Heart left ventricle (tissue), 16 donors: ENCODE measurements at regions of chr22 and their contacts with region 1.

Region 1: GRCh38 chr22:19619144-19620009 is 94.9 kb upstream of the SEPTIN5 start:
- DNase-seq: no peak
- ATAC-seq: no peak
- H3K4me3 ChIP-seq: no peak overlapping the region
- H3K27ac ChIP-seq: no peak overlapping the region
- H3K4me1 ChIP-seq: peaks cover 0 to 17% (median 6%) of the 10 kb centered on the region in 12 donors
- H3K27me3 ChIP-seq: no peaks in the 10 kb centered on the region
- CTCF ChIP-seq: no peak
- POLR2A ChIP-seq: no peak

Region 2: GRCh38 chr22:19325296-19325948 is 294.0 kb before region 1 on chr22:
- intact Hi-C with region 1: no loop called
- DNase-seq: no peak
- ATAC-seq: no peak
- H3K4me3 ChIP-seq: no peak overlapping the region
- H3K27ac ChIP-seq: no peak overlapping the region
- H3K4me1 ChIP-seq: no peaks in the 10 kb centered on the region
- H3K27me3 ChIP-seq: no peaks in the 10 kb centered on the region
- CTCF ChIP-seq: no peak
- POLR2A ChIP-seq: no peak

Region 3: DNA sequence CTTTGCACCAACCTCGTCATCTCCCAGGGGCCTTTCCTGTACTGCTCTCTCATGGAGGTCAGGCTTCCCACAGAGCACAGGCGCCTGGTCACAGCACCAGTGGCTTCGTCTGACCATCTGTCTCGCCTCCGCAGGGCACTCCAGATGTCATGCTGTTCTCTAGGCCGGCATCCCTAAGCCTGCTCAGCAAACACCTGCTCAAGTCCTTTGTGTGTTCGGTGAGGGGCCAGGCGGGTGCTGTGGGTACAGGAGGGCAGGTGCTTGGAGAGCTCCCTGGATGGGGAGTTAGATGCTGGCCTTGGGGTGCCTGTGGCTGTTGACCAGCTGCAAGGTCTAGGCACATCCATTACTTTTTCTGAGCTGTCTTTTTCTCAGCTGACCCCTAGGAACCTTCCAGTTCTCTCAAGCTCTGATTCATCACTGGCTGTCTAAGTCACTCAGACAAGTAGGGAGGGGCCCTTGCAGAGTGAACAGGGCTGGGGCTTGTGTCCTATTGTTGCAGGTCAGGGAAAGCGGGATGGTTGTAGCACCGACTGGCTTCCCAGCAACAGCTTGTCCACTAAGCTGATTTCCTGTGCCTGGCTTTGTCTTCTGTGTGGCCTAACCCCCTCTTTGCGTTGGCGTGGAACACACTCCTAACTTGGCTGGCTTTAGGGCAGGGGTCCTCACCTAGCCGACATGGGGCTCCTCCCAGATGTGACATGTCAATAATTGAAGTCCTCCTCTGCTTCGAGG is 104.4 kb before region 1 on chr22:
- intact Hi-C with region 1: loop called in 3 of 10 experiments (anchors 5 to 10 kb)
- DNase-seq: no peak
- ATAC-seq: no peak
- H3K4me3 ChIP-seq: no peak overlapping the region
- H3K27ac ChIP-seq: no peak overlapping the region
- H3K4me1 ChIP-seq: no peaks in the 10 kb centered on the region
- H3K27me3 ChIP-seq: no peaks in the 10 kb centered on the region
- CTCF ChIP-seq: no peak
- POLR2A ChIP-seq: no peak

Region 4: GRCh38 chr22:19568337-19569275 is 50.8 kb before region 1 on chr22:
- intact Hi-C with region 1: loop called in 3 of 10 experiments (anchors 5 to 10 kb)
- DNase-seq: peak in 1 of 5 donors; percentile 56
- ATAC-seq: peak in 2 of 4 donors; percentile 51 to 60
- H3K4me3 ChIP-seq: no peak overlapping the region
- H3K27ac ChIP-seq: peak overlapping the region in 6 of 12 donors; percentile 27 to 79 (median 72)
- H3K4me1 ChIP-seq: peaks cover 0 to 52% (median 20%) of the 10 kb centered on the region in 12 donors
- H3K27me3 ChIP-seq: no peaks in the 10 kb centered on the region
- CTCF ChIP-seq: no peak
- POLR2A ChIP-seq: no peak

Region 5: DNA sequence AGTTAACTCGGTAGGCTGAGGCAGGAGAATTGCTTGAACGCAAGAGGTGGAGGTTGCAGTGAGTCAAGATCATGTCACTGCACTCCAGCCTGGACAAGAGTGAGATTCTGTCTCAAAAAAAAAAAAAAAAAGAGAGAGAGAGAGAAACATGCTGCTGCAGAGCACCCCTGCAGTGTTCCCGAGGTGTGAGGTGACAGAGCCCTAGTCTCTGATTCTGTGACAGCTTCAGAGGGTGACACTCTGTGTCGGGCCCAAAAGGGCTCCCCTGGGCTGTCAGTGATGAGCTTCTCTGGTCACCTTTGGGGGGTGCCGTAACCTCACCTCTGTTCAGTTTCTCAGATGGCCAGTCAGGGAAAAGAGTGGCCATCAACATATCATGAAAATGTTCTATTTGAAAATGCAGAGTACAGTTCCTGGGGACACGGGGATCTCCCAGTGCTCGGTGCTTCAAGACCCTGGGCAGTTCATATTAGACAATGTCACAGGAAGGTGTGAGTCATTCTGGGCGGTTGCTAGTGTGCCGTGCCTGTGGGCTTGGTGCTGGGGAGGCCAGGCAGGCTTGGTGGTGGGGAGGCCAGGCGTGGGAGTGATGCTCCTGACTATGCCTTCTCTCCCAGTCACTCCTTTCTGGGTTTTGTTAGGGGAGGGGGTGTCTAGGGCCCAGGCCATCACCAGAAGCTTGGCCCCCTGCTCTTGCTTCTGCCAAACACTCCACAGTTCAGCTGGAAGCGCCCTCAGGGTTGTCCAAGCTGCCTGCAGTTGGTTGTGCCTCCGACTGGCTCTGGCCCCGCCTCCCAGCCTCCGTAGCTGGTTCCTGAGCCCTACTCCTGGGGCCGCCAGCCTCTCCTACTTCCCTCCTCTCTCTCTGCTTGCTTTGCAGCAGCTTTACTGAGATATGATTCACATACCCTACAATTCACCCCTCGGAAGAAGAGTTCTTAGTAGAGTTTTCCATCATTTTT is 42.6 kb before region 1 on chr22:
- intact Hi-C with region 1: loop called in 2 of 10 experiments (anchors 5 kb)
- DNase-seq: peak in 4 of 5 donors; percentile 44 to 70 (median 52)
- ATAC-seq: peak; percentile 76 to 83 (median 80)
- H3K4me3 ChIP-seq: no peak overlapping the region
- H3K27ac ChIP-seq: peak overlapping the region; percentile 37 to 78 (median 62)
- H3K4me1 ChIP-seq: peaks cover 0 to 47% (median 24%) of the 10 kb centered on the region in 12 donors
- H3K27me3 ChIP-seq: peaks cover 0 to 2% (median 0%) of the 10 kb centered on the region in 9 donors
- CTCF ChIP-seq: no peak
- POLR2A ChIP-seq: no peak

Region 6: GRCh38 chr22:19641254-19641982 is 22.0 kb after region 1 on chr22:
- intact Hi-C with region 1: no loop called
- DNase-seq: no peak
- ATAC-seq: peak in 1 of 4 donors; percentile 22
- H3K4me3 ChIP-seq: no peak overlapping the region
- H3K27ac ChIP-seq: no peak overlapping the region
- H3K4me1 ChIP-seq: peaks cover 0 to 11% (median 0%) of the 10 kb centered on the region in 12 donors
- H3K27me3 ChIP-seq: peaks cover 0 to 21% (median 0%) of the 10 kb centered on the region in 9 donors
- CTCF ChIP-seq: peak in 5 of 12 donors; percentile 12 to 44 (median 33)
- POLR2A ChIP-seq: no peak